ENCODE measurements at regions of chrX and their contacts with region 1.

Region 1: DNA sequence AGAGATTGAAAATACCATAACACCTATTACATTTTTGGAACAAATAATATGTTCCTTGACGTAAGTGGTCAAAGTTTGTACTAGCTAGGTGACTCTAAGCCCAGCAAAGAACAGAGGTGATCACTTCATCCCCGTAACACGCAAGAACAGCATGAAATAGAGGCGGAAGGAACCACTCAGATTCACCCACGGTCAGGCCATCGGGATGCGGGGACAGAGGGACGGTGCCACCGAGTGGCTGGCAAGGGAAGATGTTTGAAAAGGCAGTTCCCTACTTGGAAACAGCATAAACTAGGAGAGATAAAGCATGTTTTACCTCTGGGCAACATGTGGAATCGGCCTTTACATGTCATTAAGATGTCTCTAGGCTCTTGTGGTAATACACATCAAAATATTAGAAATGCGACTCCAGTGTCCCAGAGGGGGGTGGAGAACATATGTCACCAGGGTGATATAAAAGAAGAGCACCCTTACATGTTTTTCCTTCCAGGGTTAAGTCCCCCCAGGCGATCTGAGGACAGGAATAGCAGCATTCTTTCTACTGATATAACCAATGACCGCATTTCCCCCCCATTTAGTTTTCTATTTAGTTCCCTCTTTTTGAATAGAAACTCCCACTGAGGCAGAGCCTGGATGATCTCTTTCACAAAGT is 84.0 kb downstream of the PHKA2 start:
- DNase-seq: no peak
- H3K4me3 ChIP-seq: no peak overlapping the region
- H3K27ac ChIP-seq: no peak overlapping the region
- H3K4me1 ChIP-seq: no peaks in the 10 kb centered on the region
- H3K27me3 ChIP-seq: no peaks in the 10 kb centered on the region

Region 2: GRCh38 chrX:18390941-18391538 is 508.9 kb before region 1 on chrX:
- in situ Hi-C with region 1: loop called (anchors 10 kb)
- DNase-seq: peak; percentile 60
- H3K4me3 ChIP-seq: no peak overlapping the region
- H3K27ac ChIP-seq: no peak overlapping the region
- H3K4me1 ChIP-seq: no peaks in the 10 kb centered on the region
- H3K27me3 ChIP-seq: no peaks in the 10 kb centered on the region